ENCODE measurements at regions of chr9 and their contacts with region 1.

Region 1: GRCh38 chr9:20941174-20941690 is 90.2 kb downstream of the HACD4 start:
- DNase-seq: peak; percentile 63
- H3K4me3 Mint-ChIP-seq: no peak overlapping the region
- H3K27ac Mint-ChIP-seq: no peak overlapping the region
- H3K4me1 Mint-ChIP-seq: peaks cover 7% of the 10 kb centered on the region
- H3K27me3 Mint-ChIP-seq: no peaks in the 10 kb centered on the region

Region 2: DNA sequence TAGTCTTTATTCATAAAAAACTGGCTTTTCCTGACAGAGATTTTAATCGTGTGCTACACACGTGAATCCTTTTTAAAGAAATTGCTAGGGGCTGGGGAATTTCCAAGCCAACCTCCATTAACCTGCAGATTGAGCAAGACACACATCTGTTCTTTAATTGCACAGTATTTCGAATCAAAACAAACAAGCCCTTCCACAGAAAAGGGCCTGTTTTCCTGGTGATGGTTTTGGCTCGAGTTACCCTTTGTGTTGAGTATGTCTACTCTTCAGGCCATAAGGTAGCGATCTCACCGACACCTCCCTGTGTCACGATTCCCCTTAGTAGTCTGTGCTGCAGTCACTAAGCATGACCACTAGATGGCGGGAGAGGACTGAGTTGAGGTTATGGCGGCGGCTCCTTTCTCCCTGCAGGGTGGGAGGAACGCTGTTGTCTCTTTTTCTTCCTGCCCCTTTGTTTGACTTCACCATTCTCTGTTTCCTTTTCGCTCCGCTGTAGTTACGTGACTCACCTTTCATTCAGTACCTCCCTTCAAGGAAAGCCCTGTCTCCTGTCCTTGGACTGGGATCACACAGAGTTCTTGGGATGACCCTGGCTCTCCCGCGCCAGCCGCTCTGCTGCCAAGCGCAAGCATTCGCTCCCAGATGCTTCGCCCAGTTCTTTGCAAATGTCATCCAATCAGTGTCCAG is 1015.3 kb before region 1 on chr9:
- CTCF ChIA-PET with region 1: interaction called, 10 read pairs
- DNase-seq: peak; percentile 87
- H3K4me3 Mint-ChIP-seq: peak overlapping the region; percentile 70
- H3K27ac Mint-ChIP-seq: peak overlapping the region; percentile 50
- H3K4me1 Mint-ChIP-seq: peaks cover 47% of the 10 kb centered on the region
- H3K27me3 Mint-ChIP-seq: peaks cover 16% of the 10 kb centered on the region

Region 3: GRCh38 chr9:20356403-20357035 is 584.7 kb before region 1 on chr9:
- CTCF ChIA-PET with region 1: interaction called, 18 read pairs
- DNase-seq: peak; percentile 80
- H3K4me3 Mint-ChIP-seq: peak overlapping the region; percentile 29
- H3K27ac Mint-ChIP-seq: peak overlapping the region; percentile 86
- H3K4me1 Mint-ChIP-seq: peaks cover 96% of the 10 kb centered on the region
- H3K27me3 Mint-ChIP-seq: no peaks in the 10 kb centered on the region

Region 4: GRCh38 chr9:20622330-20623020 is 318.8 kb before region 1 on chr9 and contains the start of gene MLLT3:
- CTCF ChIA-PET with region 1: interaction called, 23 read pairs
- DNase-seq: peak; percentile 98
- H3K4me3 Mint-ChIP-seq: peak within 1 kb of the TSS; percentile 98
- H3K27ac Mint-ChIP-seq: peak within 1 kb of the TSS; percentile 99
- H3K4me1 Mint-ChIP-seq: peaks cover 43% of the 10 kb centered on the region
- H3K27me3 Mint-ChIP-seq: no peaks in the 10 kb centered on the region

Region 5: DNA sequence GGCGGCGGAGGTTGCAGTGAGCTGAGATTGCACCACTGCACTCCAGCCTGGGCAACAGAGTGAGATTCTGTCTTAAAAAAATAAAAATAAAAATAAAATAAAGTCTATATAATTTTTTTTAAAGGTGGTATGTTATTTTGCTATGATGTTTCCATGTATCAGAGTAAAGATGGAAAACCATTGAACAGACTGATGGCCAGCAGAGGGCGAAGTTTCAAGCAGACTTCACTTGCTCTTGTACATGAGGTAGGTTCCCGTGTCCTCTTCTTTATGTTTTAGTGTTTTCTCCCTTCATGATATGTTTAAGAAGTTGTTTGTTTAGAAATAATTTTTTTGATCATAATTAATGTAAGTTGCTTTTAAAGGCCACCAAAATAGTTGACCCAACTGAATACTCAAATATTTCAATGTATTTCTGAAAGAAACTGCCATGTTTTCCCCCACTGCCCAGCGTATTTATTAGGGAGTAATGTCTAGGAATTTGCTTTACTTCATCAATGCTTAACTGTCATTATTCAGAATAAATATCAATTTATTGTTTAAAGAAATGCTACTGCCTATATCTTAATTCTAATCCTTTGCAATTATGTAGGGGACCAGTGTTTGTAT is 56.1 kb before region 1 on chr9:
- CTCF ChIA-PET with region 1: interaction called, 31 read pairs
- DNase-seq: peak; percentile 75
- H3K4me3 Mint-ChIP-seq: no peak overlapping the region
- H3K27ac Mint-ChIP-seq: no peak overlapping the region
- H3K4me1 Mint-ChIP-seq: no peaks in the 10 kb centered on the region
- H3K27me3 Mint-ChIP-seq: no peaks in the 10 kb centered on the region

Region 6: DNA sequence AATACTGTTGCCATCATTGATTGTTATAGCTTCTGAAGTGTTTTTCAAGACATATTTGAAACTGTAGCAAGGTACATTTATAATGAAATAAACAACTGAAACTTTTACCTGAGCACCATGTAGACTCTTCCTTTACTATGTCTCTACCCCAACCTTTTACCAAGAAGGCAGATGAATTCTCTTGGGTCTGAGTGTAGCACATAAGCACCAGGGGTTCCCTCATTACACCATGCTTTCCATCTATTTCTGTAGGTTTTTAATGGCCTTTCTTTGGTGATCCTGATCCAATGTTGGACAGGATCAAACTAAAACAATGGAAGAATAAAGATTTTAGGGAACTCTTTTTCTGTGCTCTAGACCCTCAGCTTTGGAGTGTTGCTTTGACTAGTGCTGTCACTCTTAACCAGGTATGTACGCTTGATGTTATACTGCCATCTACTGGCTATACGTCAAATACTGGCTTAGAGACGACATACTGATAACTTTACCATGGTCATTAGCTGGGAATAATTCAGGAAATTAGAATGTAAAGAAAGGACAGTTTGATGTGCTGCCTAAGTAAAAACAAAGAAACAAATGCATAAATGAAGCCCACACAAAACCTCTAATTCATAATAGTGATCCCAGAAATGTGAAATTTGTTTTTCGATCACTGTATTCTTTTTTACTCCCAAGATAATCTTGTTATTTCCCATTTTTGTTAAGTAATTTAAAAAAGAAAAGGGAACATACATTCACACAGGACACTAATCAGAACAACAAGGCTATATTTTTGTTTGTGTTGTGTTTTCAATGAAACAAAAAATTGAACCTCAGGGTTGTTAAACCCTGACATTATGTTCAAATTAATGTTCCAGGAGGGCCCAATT is 169.7 kb after region 1 on chr9:
- CTCF ChIA-PET with region 1: interaction called, 32 read pairs
- DNase-seq: no peak
- H3K4me3 Mint-ChIP-seq: no peak overlapping the region
- H3K27ac Mint-ChIP-seq: no peak overlapping the region
- H3K4me1 Mint-ChIP-seq: no peaks in the 10 kb centered on the region
- H3K27me3 Mint-ChIP-seq: peaks cover 10% of the 10 kb centered on the region

Region 7: DNA sequence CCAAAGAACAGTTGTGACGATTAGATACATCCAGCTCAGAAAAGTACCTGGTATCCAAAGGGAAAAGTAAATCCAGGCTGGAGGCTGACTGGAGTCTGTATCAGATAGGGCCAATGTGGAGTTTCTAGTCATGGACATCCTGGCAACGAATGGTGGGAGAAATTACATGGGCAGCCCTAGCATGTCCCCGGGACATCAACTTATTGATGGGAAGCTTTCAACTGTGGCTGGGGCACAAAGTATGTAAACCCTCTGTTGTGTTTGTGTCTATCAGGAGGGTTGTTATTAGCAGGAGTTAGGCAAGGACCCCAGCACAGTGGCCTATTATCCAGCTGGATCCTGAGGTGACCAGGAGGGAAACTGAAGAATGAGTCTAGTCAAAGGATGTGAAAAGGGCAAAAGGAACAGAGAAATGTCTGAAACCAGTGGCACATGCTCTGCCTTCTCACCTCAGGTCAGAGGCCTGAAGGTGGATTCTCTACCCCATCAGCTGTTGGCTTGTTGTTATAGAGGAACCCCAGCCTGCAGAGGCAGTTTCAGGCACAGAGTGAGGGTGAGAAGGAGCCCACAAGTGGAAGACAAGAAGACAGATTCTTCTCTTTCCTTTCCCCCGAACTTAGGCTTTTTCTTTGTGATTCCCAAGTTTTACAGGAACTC is 180.5 kb after region 1 on chr9:
- CTCF ChIA-PET with region 1: no interaction called
- DNase-seq: no peak
- H3K4me3 Mint-ChIP-seq: no peak overlapping the region
- H3K27ac Mint-ChIP-seq: no peak overlapping the region
- H3K4me1 Mint-ChIP-seq: no peaks in the 10 kb centered on the region
- H3K27me3 Mint-ChIP-seq: peaks cover 34% of the 10 kb centered on the region

Measured in activated naive CD4-positive, alpha-beta T cell treated with anti-CD3 and anti-CD28 coated beads, Interleukin-2, amount 10 ng/mL, durations not matched to agents 7 days and 5 days (primary cell).